ENCODE measurements at regions of chr3 and their contacts with region 1.

Region 1: GRCh38 chr3:76203578-76203977 is 418.2 kb upstream of the ZNF717 start:
- DNase-seq: no peak
- H3K4me3 ChIP-seq: no peak overlapping the region
- H3K27ac ChIP-seq: no peak overlapping the region
- H3K4me1 ChIP-seq: no peaks in the 10 kb centered on the region
- H3K27me3 ChIP-seq: no peaks in the 10 kb centered on the region
- CTCF ChIP-seq: no peak
- POLR2A ChIP-seq: no peak

Region 2: DNA sequence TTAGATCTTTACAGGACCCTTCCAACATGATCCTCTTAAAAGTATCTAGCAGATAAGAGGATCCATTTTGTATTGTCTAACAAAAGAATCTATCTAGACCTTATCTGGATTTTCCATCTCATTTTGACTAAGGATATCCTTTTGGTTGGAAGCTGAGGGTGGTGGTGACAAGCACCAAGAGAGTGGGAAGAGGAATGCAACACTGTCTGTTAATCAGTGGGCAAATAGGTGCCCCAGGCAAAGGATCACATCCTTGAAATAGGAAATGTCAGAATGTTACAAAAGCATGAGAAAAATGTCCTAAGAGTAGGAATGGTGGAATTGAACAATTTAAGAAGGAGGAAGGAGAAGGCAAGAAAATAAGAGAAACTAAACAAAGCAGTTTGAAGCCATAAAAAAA is 1168.4 kb before region 1 on chr3:
- intact Hi-C with region 1: loop called (anchors 10 kb)
- DNase-seq: no peak
- H3K4me3 ChIP-seq: no peak overlapping the region
- H3K27ac ChIP-seq: no peak overlapping the region
- H3K4me1 ChIP-seq: no peaks in the 10 kb centered on the region
- H3K27me3 ChIP-seq: no peaks in the 10 kb centered on the region
- CTCF ChIP-seq: no peak
- POLR2A ChIP-seq: no peak

Region 3: DNA sequence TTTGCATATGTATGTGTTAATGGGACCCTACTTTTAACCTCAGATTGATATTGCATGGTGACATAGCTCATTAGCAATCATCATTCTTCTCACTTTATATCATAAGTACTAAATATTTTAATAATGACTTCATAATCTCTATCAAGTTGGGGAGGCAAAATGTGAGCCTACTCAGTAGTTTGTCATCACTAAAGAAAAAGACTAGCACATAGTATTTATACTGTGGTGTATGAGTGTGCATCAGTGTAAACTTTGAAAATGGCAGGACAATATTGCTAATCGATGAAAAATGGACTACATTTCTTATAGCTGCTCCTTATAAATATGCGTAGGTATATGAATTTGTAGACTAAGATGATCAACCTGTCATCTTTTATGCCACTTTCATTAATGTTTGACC is 211.8 kb after region 1 on chr3:
- intact Hi-C with region 1: no loop called
- DNase-seq: no peak
- H3K4me3 ChIP-seq: no peak overlapping the region
- H3K27ac ChIP-seq: no peak overlapping the region
- H3K4me1 ChIP-seq: no peaks in the 10 kb centered on the region
- H3K27me3 ChIP-seq: no peaks in the 10 kb centered on the region
- CTCF ChIP-seq: no peak
- POLR2A ChIP-seq: no peak

Measured in breast epithelium (tissue), 4 donors.